AG04449 (cell line): ENCODE measurements at regions of chr16 and their contacts with region 1.

Region 1: GRCh38 chr16:88561485-88562369 is 8.5 kb upstream of the ZC3H18 start:
- DNase-seq: no peak
- H3K4me3 ChIP-seq: peak overlapping the region; percentile 45
- CTCF ChIP-seq: peak; percentile 80

Region 2: GRCh38 chr16:88347656-88348376 is 213.9 kb before region 1 on chr16:
- CTCF ChIA-PET with region 1: no interaction called
- POLR2A ChIA-PET with region 1: no interaction called
- DNase-seq: no peak
- H3K4me3 ChIP-seq: no peak overlapping the region
- CTCF ChIP-seq: no peak

Region 3: GRCh38 chr16:88442727-88443576 is 118.8 kb before region 1 on chr16:
- CTCF ChIA-PET with region 1: interaction called, 15 read pairs
- POLR2A ChIA-PET with region 1: no interaction called
- DNase-seq: no peak
- H3K4me3 ChIP-seq: no peak overlapping the region
- CTCF ChIP-seq: peak; percentile 98

Region 4: DNA sequence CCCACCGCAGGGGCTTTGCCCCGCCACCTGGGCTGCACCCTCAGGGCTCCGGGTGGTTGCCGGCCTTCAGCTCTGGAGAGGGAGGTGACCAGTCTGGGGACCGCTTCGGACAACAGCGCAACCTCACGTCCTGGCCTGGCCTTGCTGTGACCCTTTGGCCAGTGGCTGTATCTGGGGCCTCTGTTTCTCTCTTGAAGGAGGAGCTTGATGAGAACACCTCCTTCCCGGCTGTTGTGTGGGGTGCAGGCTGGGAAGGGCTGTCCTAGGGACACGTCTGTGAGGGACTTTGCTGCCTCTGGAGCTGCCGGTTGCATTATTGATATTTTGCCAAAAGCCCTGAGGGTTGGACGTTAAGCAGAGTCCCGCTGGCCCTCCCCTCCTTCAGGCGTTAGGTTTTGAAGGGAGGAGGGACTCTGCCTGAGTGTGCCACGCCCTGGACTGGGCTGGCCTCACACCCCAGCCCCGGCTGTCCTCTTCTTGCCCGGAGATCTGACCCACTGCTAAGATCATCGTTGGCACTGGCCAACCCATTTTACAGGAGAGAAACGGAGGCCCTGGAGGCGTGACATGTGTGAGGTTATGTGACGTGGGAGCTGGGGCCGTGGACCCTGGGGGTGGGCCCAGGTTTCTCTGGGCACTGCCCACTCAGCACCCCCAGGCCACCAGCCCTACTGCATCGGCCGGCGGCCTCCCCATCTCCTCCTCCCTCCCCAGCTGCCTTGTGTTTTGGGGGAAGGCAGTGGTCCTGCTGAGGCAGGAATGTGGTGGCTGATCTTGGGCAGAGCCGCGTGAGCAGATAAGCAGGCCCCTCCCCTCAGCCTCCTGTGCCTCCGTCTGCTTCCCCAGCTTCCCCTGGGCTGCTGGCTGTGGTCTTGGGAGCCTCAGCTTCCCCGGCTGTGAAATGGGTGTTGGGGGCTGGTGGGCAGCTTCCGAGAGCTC is 100.1 kb before region 1 on chr16:
- CTCF ChIA-PET with region 1: no interaction called
- POLR2A ChIA-PET with region 1: no interaction called
- DNase-seq: no peak
- H3K4me3 ChIP-seq: no peak overlapping the region
- CTCF ChIP-seq: no peak

Region 5: DNA sequence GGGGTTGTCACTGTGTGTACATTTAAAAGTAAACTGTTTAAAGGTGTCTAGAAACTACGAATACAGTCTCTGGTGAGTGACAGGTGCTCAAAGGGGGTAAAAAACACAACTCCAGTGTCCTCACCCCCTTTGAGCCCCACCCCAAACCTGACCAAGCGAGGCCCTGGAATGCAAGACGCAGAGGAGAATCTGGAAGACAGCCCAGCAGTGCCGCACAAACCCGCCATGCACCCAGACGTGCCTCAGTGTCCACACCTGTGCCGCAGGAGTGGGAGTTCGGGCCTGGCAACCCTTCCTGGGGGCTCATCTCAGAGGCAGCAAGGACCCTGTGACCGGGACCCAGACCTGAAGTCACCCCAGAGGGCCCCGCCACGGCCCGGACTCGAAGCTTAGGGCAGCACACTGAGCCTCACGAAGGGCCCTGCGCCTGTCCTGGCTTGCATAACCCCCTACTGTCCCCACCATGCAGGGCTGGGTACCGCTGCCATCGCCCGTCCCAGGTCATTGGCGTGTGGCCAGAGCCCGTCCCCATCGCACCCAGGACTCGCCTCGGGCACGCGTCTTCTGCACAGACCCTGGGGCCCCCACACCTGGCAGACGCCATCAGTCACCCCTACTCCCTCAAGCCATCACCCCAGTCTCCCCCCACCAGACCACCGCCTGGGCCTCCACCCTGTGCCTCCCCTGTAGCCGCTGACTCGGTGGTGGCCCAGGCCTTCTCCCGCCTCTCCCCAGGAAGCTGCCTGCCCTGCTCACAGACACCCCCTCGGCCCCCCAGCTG is 24.6 kb before region 1 on chr16:
- CTCF ChIA-PET with region 1: interaction called, 15 read pairs
- POLR2A ChIA-PET with region 1: no interaction called
- DNase-seq: no peak
- H3K4me3 ChIP-seq: no peak overlapping the region
- CTCF ChIP-seq: no peak